Right ventricle myocardium inferior (tissue), 1 donor: ENCODE measurements at regions of chr1 and their contacts with region 1.

Region 1: GRCh38 chr1:77779529-77780281 is at the start of gene MIGA1:
- DNase-seq: peak; percentile 90
- ATAC-seq: peak; percentile 99
- total RNA-seq, gene MIGA1: 9.9 TPM

Region 2: DNA sequence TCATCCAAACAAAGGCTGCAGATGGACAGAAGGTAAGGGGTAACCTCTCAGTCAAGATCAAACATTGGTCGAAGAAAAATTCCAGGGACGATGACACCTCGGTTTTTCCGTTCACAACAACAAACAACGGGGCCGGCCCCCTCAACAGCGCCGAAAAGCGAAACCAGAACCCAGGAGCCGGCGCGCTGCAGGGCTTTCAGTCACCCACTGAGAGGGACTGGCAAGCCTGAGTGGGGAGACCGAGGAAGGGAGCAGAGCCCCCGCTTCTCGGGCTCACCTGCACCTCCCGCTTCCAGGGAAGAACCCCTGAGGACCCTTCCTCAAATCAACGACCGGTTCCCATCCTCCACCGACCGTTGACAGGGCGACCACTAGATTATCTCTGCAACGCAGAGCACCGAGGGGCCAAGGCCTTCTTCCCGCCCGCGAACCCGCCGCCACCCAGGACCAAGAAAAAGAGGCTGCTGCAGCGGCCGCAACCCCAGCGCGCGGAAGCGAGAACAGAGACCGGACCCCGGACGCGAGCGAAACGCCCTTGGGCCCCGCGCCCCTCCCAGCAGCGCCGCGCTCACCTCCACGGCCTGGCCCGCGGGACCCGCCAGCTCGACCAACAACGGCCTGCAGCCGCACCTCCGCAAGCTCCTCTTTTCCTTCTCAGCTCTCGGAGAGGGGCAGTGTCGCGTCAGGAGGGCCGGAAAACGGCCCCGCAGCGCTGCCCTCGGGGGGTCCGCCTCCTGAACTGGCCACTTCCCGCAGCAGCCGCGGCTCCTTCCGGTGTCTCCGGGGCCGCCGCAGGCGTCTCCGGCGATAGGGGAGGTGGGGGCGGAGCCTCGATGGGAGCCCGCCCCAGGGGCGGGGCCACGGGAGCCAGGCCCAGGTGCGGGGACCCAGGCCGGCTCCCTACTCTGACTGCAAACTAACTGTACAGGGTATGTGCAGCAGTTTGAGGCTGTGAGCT is 20.4 kb before region 1 on chr1 and contains the start of gene USP33:
- intact Hi-C with region 1: loop called (anchors 1 kb)
- DNase-seq: peak; percentile 93
- ATAC-seq: peak; percentile 99
- total RNA-seq, gene USP33: 26.9 TPM